A673 (cell line): ENCODE measurements at regions of chr21 and their contacts with region 1.

Region 1: DNA sequence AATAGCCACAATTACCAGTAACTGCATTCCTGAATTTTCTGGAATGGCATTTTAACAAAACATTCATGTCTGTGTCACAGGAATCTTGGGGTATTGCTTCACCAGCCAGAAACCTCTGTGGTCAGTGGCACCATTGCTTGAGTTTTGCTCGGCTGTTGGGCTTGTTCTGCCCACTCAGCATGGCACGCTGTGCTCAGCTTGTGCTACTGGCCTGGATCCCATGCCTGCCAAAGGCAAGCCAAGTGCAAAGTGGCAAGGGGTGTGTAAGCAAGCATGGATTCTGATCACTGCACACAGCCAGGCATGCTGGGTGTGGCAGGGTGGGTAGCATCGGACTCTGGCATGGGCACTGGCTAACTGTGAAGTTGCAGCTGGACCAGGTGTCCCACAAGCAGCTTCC is 1150.9 kb downstream of the MRPL39 start:
- DNase-seq: no peak
- H3K4me3 ChIP-seq: no peak overlapping the region
- H3K27ac ChIP-seq: no peak overlapping the region
- H3K4me1 ChIP-seq: no peaks in the 10 kb centered on the region
- H3K27me3 ChIP-seq: no peaks in the 10 kb centered on the region
- CTCF ChIP-seq: no peak

Region 2: GRCh38 chr21:24014381-24014780 is 442.0 kb before region 1 on chr21:
- CTCF ChIA-PET with region 1: no interaction called
- POLR2A ChIA-PET with region 1: no interaction called
- intact Hi-C with region 1: no loop called
- DNase-seq: no peak
- H3K4me3 ChIP-seq: no peak overlapping the region
- H3K27ac ChIP-seq: no peak overlapping the region
- H3K4me1 ChIP-seq: no peaks in the 10 kb centered on the region
- H3K27me3 ChIP-seq: no peaks in the 10 kb centered on the region
- CTCF ChIP-seq: 0 out of 2 replicates have a peak, but pooled peaks have one; percentile 25

Region 3: DNA sequence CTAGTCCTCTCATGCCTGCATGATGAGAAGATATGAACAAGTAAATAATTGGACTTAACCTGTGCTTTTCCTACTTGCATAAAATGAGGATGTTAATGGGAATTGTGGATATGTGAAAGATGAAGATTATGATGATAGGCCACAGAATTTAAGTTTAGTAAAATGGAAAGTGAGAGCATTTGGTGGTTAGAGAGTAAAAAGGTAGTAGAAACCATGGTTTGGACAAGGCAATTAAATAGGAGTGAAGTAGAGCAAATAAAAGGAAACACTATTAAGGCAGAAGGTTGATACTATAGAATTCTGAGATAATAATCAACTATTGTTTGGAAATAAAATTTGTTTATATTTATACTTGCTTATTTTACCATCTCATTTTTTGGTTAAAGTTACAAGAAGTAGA is 11.6 kb before region 1 on chr21:
- CTCF ChIA-PET with region 1: no interaction called
- POLR2A ChIA-PET with region 1: no interaction called
- intact Hi-C with region 1: loop called (anchors 1 kb)
- DNase-seq: no peak
- H3K4me3 ChIP-seq: no peak overlapping the region
- H3K27ac ChIP-seq: no peak overlapping the region
- H3K4me1 ChIP-seq: no peaks in the 10 kb centered on the region
- H3K27me3 ChIP-seq: no peaks in the 10 kb centered on the region
- CTCF ChIP-seq: no peak

Region 4: DNA sequence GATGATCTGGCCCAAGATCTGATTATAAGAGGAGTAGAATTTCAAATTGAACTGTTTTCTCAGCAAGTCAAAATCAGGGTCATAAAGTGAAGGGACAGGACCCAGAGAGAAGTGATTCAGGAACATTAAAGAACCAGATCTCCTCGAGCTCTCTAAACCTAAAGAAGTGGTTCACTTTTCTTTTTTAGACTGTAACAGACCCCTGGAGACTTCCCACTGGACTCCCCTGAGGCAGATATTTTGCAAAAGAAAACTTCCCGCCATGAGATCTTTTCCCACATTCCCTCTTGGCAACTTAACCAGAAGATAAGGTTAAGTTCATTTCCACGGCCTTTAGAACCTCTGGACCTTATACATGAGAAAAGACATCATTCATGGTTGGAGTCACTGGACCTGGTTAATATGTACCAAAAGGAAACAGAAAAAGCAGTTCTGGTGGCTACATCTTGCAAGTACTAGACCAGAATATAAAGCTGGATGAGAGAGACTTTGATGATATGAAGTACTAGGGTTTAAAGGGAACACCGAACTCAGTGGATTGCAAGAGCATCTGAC is 89.5 kb after region 1 on chr21:
- CTCF ChIA-PET with region 1: no interaction called
- POLR2A ChIA-PET with region 1: no interaction called
- intact Hi-C with region 1: no loop called
- DNase-seq: no peak
- H3K4me3 ChIP-seq: no peak overlapping the region
- H3K27ac ChIP-seq: no peak overlapping the region
- H3K4me1 ChIP-seq: no peaks in the 10 kb centered on the region
- H3K27me3 ChIP-seq: no peaks in the 10 kb centered on the region
- CTCF ChIP-seq: no peak